Colonic mucosa (tissue), 4 donors: ENCODE measurements at regions of chr18 and their contacts with region 1.

Region 1: DNA sequence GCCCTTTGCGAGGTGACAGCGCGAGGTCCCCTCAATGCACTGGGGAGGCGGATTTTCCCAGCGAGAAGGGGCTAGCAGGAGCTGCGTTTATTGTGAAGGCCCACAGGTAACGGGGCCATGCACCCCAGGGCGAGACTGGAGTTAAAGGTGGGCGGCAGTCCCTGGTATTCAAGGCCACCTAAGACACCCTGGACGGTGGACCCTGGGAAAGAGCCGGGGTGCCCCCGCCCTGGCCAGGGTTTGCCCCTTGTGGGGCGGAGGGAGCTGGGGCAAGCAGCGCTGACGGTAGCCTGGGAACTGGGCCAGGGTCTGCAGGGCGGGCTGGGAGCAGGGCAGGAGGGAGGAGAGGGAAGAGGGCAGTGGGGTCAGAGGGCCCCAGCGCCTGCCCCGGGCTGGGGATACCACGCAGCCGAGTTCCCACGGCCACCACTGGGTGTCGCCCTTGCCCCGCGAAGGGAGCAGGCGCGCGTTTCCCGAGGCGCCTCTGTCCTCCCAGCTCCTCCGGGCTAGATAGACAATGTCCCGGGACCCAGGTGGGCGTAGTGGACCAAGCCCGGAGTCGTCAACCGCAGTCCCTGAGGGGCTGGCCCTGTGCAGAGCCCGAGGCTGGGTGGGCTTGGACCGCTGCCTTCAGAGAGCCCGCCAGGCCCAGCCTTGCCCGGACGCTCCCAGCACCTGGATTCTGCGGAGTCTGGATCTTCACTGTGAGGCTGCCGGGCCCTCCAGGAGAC is 80.2 kb downstream of the SMAD4 start:
- DNase-seq: peak; percentile 72
- H3K4me3 ChIP-seq: no peak overlapping the region
- H3K27ac ChIP-seq: no peak overlapping the region
- H3K4me1 ChIP-seq: no peaks in the 10 kb centered on the region
- H3K27me3 ChIP-seq: no peaks in the 10 kb centered on the region
- CTCF ChIP-seq: peak; percentile 97

Region 2: GRCh38 chr18:51383116-51383515 is 272.9 kb after region 1 on chr18:
- intact Hi-C with region 1: loop called (anchors 5 kb)
- DNase-seq: no peak
- H3K4me3 ChIP-seq: no peak overlapping the region
- H3K27ac ChIP-seq: no peak overlapping the region
- H3K4me1 ChIP-seq: no peaks in the 10 kb centered on the region
- H3K27me3 ChIP-seq: no peaks in the 10 kb centered on the region
- CTCF ChIP-seq: no peak

Region 3: DNA sequence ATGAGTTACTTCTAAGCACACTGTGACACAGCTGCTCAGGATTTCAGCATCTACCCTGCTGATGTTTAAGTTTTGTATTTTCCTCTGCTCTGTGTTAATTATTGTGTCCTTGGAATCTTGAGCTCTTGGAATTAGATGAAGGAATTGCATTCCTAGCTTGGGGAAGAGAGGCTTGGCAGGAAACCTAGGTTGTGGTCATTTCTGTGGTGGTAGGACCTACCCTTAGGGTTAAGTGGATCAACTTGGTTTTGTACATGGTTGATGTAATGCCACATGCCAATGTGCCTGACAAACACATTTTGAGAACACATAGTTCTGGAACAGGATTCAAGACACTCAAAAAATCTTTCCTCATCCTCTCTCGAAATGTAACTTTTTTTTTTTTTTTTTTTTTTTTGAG is 351.7 kb after region 1 on chr18:
- intact Hi-C with region 1: no loop called
- DNase-seq: no peak
- H3K4me3 ChIP-seq: no peak overlapping the region
- H3K27ac ChIP-seq: no peak overlapping the region
- H3K4me1 ChIP-seq: no peaks in the 10 kb centered on the region
- H3K27me3 ChIP-seq: no peaks in the 10 kb centered on the region
- CTCF ChIP-seq: no peak

Region 4: GRCh38 chr18:51668101-51668500 is 557.9 kb after region 1 on chr18:
- intact Hi-C with region 1: loop called (anchors 10 kb)
- DNase-seq: peak; percentile 46
- H3K4me3 ChIP-seq: no peak overlapping the region
- H3K27ac ChIP-seq: no peak overlapping the region
- H3K4me1 ChIP-seq: no peaks in the 10 kb centered on the region
- H3K27me3 ChIP-seq: no peaks in the 10 kb centered on the region
- CTCF ChIP-seq: peak; percentile 69

Region 5: DNA sequence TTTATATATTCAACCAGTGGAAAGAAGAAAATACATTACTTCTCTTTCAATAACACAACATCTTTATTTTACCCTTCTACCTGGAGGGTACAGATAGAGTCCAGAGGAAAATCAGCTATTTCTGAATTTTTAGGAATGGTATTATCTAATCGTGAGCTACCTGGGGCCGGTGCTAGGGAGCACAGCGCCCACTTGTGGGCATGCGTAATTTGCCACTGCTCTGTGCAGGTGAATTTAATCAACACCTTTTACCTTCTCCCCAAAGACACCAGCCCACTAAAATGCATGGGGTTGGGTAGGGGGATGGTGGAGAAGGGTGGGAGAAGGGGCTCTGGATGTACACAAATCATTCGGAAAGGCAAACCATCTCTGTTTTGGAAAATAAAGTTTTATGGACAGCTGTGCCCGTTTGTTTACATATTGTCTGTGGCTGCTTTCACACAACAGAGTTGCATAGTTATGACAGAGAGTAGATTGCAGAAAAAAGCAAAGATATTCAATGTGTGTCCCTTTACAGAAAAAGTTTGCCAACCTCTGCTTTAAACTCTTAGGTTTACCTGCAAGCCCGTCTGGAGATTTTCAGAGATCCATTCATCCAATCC is 1178.3 kb after region 1 on chr18:
- intact Hi-C with region 1: loop called (anchors 5 kb)
- DNase-seq: peak; percentile 23
- H3K4me3 ChIP-seq: no peak overlapping the region
- H3K27ac ChIP-seq: no peak overlapping the region
- H3K4me1 ChIP-seq: no peaks in the 10 kb centered on the region
- H3K27me3 ChIP-seq: no peaks in the 10 kb centered on the region
- CTCF ChIP-seq: peak; percentile 62